ENCODE measurements at regions of chr17 and their contacts with region 1.

Region 1: GRCh38 chr17:42422958-42423712 is at the start of gene CAVIN1:
- DNase-seq: peak; percentile 91
- H3K4me3 ChIP-seq: peak within 1 kb of the TSS; percentile 64
- H3K27me3 ChIP-seq: no peaks in the 10 kb centered on the region
- CTCF ChIP-seq: no peak
- polyA plus RNA-seq, gene CAVIN1: 607 and 734 TPM in 2 replicates

Region 2: DNA sequence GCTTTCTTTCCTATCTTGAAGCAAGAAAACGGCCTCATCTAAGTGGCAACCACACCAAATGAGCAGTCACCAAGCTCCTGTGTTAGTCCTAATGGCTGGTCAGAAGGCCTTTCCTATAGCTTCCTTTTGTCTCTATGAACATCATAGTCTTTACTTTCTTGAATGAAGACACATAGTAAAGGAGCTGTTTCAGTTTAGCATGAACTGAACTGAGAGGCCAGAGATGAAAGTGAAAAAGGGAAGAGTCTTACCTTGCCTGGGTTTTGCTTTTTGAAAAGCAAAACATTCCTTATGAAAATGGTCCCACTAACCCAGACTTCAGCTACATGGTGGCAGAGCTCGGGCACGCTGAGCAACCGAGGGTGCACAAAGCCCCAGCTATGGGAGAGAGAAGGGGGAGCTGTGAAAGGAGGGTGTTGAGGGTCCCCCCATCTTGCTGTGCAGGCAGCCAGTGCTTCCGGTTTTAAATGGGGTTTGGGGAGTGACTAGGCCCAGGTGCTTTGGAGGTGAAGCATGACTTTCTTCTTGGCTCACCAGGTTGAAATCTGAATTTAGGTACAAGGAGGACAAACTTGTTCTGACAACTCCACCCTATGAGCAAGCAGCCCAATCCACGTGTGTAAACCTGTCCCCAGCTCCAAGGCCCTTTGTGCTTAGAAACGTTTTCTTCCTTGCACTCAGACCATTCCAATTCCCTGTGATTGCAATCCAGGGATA is 163.5 kb after region 1 on chr17:
- CTCF ChIA-PET with region 1: no interaction called
- POLR2A ChIA-PET with region 1: no interaction called
- DNase-seq: no peak
- H3K4me3 ChIP-seq: no peak overlapping the region
- H3K27me3 ChIP-seq: no peaks in the 10 kb centered on the region
- CTCF ChIP-seq: no peak

Region 3: GRCh38 chr17:42681976-42682721 is 259.0 kb after region 1 on chr17 and contains the start of gene CNTNAP1:
- CTCF ChIA-PET with region 1: no interaction called
- POLR2A ChIA-PET with region 1: no interaction called
- DNase-seq: no peak
- H3K4me3 ChIP-seq: peak within 1 kb of the TSS; percentile 66
- H3K27me3 ChIP-seq: no peaks in the 10 kb centered on the region
- CTCF ChIP-seq: no peak
- polyA plus RNA-seq, gene CNTNAP1: 51.8 and 90.6 TPM in 2 replicates

Region 4: DNA sequence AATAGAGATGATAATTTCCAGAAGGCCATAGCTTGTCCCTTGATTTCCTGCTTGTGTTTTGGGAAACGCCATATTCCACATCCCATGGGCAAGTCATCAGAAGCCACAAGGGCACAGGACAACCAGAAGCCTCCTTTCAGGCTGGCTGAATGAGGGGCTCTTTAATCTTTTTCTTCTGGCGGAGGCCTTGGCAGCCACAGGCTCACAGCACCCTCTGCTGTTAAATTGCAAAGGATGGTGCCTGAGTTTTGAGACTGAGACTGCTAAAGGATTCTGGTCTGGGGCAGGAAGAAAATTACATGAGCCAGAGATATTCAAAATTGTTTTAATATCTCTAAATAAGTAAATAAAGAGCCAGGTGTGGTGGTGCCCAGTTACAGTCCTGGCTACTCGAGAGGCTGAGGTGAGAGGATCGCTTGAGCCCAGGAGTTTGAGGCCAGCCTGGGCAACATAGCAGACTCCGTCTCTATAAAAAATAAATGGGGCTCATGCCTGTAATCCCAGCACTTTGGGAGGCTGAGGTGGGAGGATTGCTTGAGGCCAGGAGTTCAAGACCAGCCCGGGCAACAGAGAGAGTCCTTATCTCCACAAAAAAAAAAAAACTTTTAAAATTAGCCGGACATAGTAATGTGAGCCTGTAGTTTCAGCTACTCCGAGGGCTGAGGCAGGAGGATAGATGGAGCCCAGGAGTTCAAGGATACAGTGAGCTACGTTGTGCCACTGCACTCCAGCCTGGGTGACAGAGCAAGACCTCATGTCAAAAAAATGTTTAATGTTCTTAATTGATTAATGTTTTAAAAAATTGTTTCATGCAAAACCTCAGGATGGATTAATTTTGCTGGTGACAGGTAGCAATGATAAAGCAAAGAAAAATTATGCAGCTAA is 514.8 kb after region 1 on chr17:
- CTCF ChIA-PET with region 1: no interaction called
- POLR2A ChIA-PET with region 1: interaction called, 17 read pairs
- DNase-seq: peak; percentile 2
- H3K4me3 ChIP-seq: no peak overlapping the region
- H3K27me3 ChIP-seq: peaks cover 2% of the 10 kb centered on the region; the same call in 1 of the 2 replicates
- CTCF ChIP-seq: peak; percentile 73

Measured in BJ (cell line).